Caco-2 (cell line): ENCODE measurements at regions of chr19 and their contacts with region 1.

Region 1: GRCh38 chr19:13085666-13086065 is 17.0 kb downstream of the LYL1 start:
- DNase-seq: no peak
- H3K4me3 ChIP-seq: no peak overlapping the region
- H3K4me3 Mint-ChIP-seq: no peak overlapping the region
- H3K27ac Mint-ChIP-seq: no peak overlapping the region
- H3K4me1 ChIP-seq: no peaks in the 10 kb centered on the region
- H3K4me1 Mint-ChIP-seq: peaks cover 4% of the 10 kb centered on the region
- H3K27me3 ChIP-seq: no peaks in the 10 kb centered on the region; the same call in none of the 2 replicates
- H3K27me3 Mint-ChIP-seq: peaks cover 12% of the 10 kb centered on the region
- CTCF ChIP-seq: no peak

Region 2: DNA sequence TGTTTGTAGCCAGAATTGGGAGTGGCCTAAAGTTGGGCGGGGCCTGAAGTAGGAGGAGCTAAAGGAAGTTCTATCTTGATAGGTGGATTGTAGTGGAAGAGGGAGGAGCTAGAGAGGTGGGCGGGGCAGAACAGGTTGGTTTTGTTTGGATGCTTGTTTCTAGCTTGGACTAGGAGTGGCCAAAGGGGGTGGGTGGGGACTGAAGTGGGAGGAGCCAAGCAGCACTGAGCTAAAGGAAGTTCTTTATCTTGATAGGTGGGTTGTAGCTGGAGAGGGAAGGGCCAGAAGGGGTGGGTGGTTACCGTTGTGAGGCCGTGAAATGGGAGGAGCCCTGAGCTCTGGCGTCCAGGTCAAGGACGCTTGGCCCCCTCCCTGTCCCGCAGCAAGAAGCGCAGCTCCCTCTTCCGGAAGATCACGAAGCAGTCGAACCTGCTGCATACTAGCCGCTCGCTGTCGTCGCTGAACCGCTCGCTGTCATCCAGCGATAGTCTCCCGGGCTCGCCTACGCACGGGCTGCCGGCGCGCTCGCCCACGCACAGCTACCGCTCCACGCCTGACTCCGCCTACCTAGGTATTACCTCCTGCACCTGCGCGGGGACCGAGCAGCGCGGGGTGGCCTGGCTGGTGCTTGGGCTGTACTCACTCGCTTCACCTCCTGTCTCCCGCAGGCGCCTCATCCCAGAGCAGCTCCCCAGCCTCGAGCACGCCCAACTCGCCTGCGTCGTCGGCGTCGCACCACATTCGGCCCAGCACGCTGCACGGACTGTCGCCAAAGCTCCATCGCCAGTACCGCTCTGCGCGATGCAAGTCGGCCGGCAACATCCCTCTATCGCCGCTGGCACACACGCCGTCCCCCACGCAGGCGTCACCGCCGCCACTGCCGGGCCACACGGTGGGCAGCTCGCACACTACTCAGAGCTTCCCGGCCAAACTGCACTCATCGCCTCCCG is 212.4 kb before region 1 on chr19:
- CTCF ChIA-PET with region 1: no interaction called
- POLR2A ChIA-PET with region 1: interaction called, 10 read pairs
- intact Hi-C with region 1: no loop called
- DNase-seq: peak; percentile 69 to 84
- H3K4me3 ChIP-seq: peak overlapping the region; percentile 30
- H3K4me3 Mint-ChIP-seq: peak overlapping the region; percentile 68
- H3K27ac Mint-ChIP-seq: no peak overlapping the region
- H3K4me1 ChIP-seq: no peaks in the 10 kb centered on the region
- H3K4me1 Mint-ChIP-seq: peaks cover 6% of the 10 kb centered on the region
- H3K27me3 ChIP-seq: no peaks in the 10 kb centered on the region
- H3K27me3 Mint-ChIP-seq: no peaks in the 10 kb centered on the region
- CTCF ChIP-seq: no peak